ENCODE measurements at regions of chr4 and their contacts with region 1.

Region 1: DNA sequence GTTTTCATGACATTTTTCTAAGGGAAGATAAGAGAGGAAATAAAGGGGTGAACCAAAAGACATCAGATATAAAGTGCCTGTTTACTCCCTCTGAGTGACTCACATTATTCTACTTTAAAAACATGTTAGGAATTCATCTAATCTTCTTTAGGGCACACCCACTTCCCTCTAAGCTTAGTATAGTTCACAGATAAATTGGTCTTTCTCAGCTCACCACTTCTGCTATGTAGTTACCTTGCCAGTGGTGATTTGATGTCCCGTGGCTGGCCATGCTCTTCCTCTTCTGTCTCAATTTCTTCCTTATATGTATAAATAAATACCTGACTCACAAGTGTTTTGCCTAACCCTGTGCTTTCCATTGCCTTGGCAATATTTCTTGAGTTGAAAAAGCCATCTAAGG is 96.8 kb downstream of the PDLIM5 start:
- DNase-seq: peak; percentile 90
- H3K4me3 ChIP-seq: no peak overlapping the region
- H3K27ac ChIP-seq: peak overlapping the region; percentile 80
- H3K4me1 ChIP-seq: peaks cover 46% of the 10 kb centered on the region
- H3K27me3 ChIP-seq: no peaks in the 10 kb centered on the region
- CTCF ChIP-seq: no peak

Region 2: DNA sequence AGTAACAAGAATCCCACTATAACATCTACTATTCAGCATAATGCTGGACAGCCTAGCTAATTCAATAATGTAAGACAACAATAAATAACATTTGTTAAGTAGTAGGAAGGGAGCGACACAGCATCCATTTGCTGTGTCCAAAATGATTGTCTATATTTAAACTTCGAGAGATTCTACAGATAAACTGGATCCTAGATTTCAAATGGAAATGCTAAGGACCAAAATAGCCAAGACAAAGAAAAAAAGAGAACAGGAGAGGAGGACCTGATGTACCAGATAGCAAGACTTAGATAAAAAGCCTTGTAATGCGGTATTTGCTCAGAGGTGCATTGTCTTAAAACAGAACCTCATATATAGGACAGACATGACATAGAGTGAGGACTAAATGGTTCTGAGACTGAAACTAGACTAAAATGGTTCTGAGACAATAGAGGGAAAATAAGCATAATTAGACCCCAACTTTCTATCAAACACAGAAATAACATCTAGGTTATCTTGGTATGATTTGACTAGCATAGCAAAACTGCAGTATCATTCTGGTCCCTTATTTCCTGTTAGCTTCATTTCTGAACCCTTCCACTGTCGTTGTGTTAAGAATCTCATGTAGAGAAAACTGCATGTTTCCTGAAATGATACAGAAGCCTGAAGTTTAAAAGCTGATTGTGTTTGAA is 209.8 kb before region 1 on chr4:
- CTCF ChIA-PET with region 1: no interaction called
- dilution Hi-C with region 1: no loop called
- in situ Hi-C with region 1: no loop called
- intact Hi-C with region 1: no loop called
- DNase-seq: no peak
- H3K4me3 ChIP-seq: no peak overlapping the region
- H3K27ac ChIP-seq: no peak overlapping the region
- H3K4me1 ChIP-seq: no peaks in the 10 kb centered on the region
- H3K27me3 ChIP-seq: no peaks in the 10 kb centered on the region
- CTCF ChIP-seq: no peak

Region 3: GRCh38 chr4:94459812-94460161 is 88.8 kb before region 1 on chr4:
- CTCF ChIA-PET with region 1: no interaction called
- dilution Hi-C with region 1: no loop called
- in situ Hi-C with region 1: no loop called
- intact Hi-C with region 1: no loop called
- DNase-seq: peak; percentile 48
- H3K4me3 ChIP-seq: peak overlapping the region; percentile 2 to 15 (median 6)
- H3K27ac ChIP-seq: peak overlapping the region; percentile 73
- H3K4me1 ChIP-seq: peaks cover 47% of the 10 kb centered on the region
- H3K27me3 ChIP-seq: no peaks in the 10 kb centered on the region
- CTCF ChIP-seq: no peak

Region 4: GRCh38 chr4:94507708-94508107 is 40.9 kb before region 1 on chr4:
- CTCF ChIA-PET with region 1: no interaction called
- dilution Hi-C with region 1: no loop called
- in situ Hi-C with region 1: no loop called
- intact Hi-C with region 1: loop called (anchors 5 kb)
- DNase-seq: peak; percentile 87
- H3K4me3 ChIP-seq: no peak overlapping the region
- H3K27ac ChIP-seq: peak overlapping the region; percentile 46
- H3K4me1 ChIP-seq: peaks cover 19% of the 10 kb centered on the region
- H3K27me3 ChIP-seq: no peaks in the 10 kb centered on the region
- CTCF ChIP-seq: no peak

Region 5: GRCh38 chr4:94525993-94526728 is 22.4 kb before region 1 on chr4:
- CTCF ChIA-PET with region 1: no interaction called
- dilution Hi-C with region 1: no loop called
- in situ Hi-C with region 1: no loop called
- intact Hi-C with region 1: no loop called
- DNase-seq: no peak
- H3K4me3 ChIP-seq: no peak overlapping the region
- H3K27ac ChIP-seq: no peak overlapping the region
- H3K4me1 ChIP-seq: peaks cover 9% of the 10 kb centered on the region
- H3K27me3 ChIP-seq: no peaks in the 10 kb centered on the region
- CTCF ChIP-seq: no peak

Region 6: DNA sequence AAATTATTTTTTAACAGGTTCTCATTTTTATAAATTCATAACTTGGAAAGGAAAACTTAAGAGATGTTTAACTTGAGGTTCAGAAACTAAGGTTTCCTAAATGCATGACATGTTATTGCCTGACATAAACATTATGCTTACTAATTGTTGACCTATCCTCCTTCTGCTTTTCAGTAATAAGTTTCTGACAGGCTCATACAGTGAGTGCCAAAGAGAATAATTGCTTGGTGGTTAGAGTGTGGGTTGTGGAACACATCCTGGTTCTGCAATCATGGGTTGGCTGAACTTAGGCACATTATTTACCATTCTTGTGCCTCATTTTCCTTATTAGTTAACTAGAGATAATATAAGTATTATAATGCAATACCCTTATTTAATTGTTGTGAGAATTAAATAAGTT is 265.7 kb after region 1 on chr4:
- CTCF ChIA-PET with region 1: no interaction called
- dilution Hi-C with region 1: no loop called
- in situ Hi-C with region 1: no loop called
- intact Hi-C with region 1: no loop called
- DNase-seq: no peak
- H3K4me3 ChIP-seq: no peak overlapping the region
- H3K27ac ChIP-seq: no peak overlapping the region
- H3K4me1 ChIP-seq: no peaks in the 10 kb centered on the region
- H3K27me3 ChIP-seq: no peaks in the 10 kb centered on the region
- CTCF ChIP-seq: no peak